Motor neuron (in vitro differentiated cells): ENCODE measurements at regions of chr16 and their contacts with region 1.

Region 1: GRCh38 chr16:72474501-72475123 is 302.7 kb upstream of the PMFBP1 start:
- ATAC-seq: peak in 5 of 8 experiments; percentile 17 to 87 (median 53)
- H3K4me3 ChIP-seq: no peak overlapping the region
- H3K27ac ChIP-seq: no peak overlapping the region
- H3K4me1 ChIP-seq: peaks cover 8 to 32% of the 10 kb centered on the region in 2 donors

Region 2: GRCh38 chr16:71610936-71611871 is 863.4 kb before region 1 on chr16:
- in situ Hi-C with region 1: no loop called
- ATAC-seq: peak; percentile 94 to 100 (median 98)
- H3K4me3 ChIP-seq: no peak overlapping the region
- H3K27ac ChIP-seq: no peak overlapping the region
- H3K4me1 ChIP-seq: no peaks in the 10 kb centered on the region

Region 3: GRCh38 chr16:72371307-72372086 is 103.1 kb before region 1 on chr16:
- in situ Hi-C with region 1: no loop called
- ATAC-seq: peak in 6 of 8 experiments; percentile 27 to 94 (median 92)
- H3K4me3 ChIP-seq: no peak overlapping the region
- H3K27ac ChIP-seq: peak overlapping the region; percentile 76 to 89
- H3K4me1 ChIP-seq: peaks cover 33 to 55% of the 10 kb centered on the region in 2 donors

Region 4: DNA sequence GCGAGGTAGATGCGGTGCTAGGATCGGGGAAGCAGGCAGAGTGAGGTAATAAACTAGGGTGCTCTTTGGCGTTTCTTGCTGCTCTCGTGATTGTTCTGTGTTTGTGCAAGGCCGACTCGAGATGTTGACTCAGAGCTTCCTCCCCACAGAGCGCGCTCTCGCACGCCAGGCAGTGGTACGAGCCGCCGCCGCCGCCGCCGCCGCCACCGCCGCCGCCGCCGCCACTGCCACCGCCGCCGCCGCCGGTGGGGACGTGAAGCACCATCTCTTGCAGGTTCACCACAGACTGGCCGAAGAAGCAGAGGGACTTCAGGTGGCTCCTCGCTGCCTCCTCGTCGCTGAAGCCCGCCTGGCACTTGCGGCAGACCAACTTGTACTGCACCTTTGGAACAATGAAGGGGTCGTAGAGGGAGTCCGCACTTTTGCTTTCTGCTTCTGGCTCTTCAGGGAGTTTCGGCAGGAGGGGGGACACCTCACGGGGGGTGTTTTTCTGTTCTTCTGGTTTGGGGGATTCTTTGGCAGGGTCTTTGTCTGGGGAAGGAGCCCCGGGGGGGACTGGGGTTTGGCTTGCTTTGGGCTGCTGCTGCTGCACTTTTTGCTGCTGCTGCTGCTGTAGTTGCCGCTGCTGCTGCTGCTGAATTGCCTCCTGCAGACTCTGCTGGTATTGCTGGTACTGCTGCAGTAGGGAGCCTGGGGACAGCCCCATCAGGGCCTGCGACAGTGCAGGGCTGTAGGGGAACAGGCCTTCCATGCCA is 313.1 kb after region 1 on chr16:
- in situ Hi-C with region 1: loop called in 1 of 9 experiments (anchors 25 kb)
- ATAC-seq: peak; percentile 58 to 90 (median 88)
- H3K4me3 ChIP-seq: peak overlapping the region; percentile 13 to 38 (median 22)
- H3K27ac ChIP-seq: peak overlapping the region; percentile 12 to 38
- H3K4me1 ChIP-seq: peaks cover 24 to 29% of the 10 kb centered on the region in 2 donors